Activated CD4-positive, alpha-beta T cell treated with anti-CD3 and anti-CD28 coated beads, Interleukin-2, amount 10 ng/mL, durations not matched to agents 7 days and 5 days (primary cell): ENCODE measurements at regions of chr16 and their contacts with region 1.

Region 1: GRCh38 chr16:8949541-8950418 is 13.9 kb downstream of the USP7 start:
- DNase-seq: no peak
- H3K4me3 Mint-ChIP-seq: no peak overlapping the region
- H3K27ac Mint-ChIP-seq: no peak overlapping the region
- H3K4me1 Mint-ChIP-seq: peaks cover 85% of the 10 kb centered on the region
- H3K27me3 Mint-ChIP-seq: no peaks in the 10 kb centered on the region

Region 2: GRCh38 chr16:8920645-8921346 is 29.0 kb before region 1 on chr16:
- CTCF ChIA-PET with region 1: no interaction called
- POLR2A ChIA-PET with region 1: no interaction called
- DNase-seq: no peak
- H3K4me3 Mint-ChIP-seq: no peak overlapping the region
- H3K27ac Mint-ChIP-seq: peak overlapping the region; percentile 21
- H3K4me1 Mint-ChIP-seq: peaks cover 82% of the 10 kb centered on the region
- H3K27me3 Mint-ChIP-seq: no peaks in the 10 kb centered on the region

Region 3: GRCh38 chr16:8936421-8936820 is 13.4 kb before region 1 on chr16:
- CTCF ChIA-PET with region 1: interaction called, 14 read pairs
- POLR2A ChIA-PET with region 1: no interaction called
- DNase-seq: peak; percentile 82
- H3K4me3 Mint-ChIP-seq: no peak overlapping the region
- H3K27ac Mint-ChIP-seq: peak overlapping the region; percentile 2
- H3K4me1 Mint-ChIP-seq: peaks cover 52% of the 10 kb centered on the region
- H3K27me3 Mint-ChIP-seq: no peaks in the 10 kb centered on the region